OCI-LY7 (cell line): ENCODE measurements at regions of chr15 and their contacts with region 1.

Region 1: GRCh38 chr15:78034495-78035191 is 42.9 kb downstream of the TBC1D2B start:
- DNase-seq: peak; percentile 33
- H3K4me3 ChIP-seq: no peak overlapping the region
- H3K27ac ChIP-seq: peak overlapping the region; percentile 33
- H3K4me1 ChIP-seq: peaks cover 58% of the 10 kb centered on the region
- CTCF ChIP-seq: no peak

Region 2: DNA sequence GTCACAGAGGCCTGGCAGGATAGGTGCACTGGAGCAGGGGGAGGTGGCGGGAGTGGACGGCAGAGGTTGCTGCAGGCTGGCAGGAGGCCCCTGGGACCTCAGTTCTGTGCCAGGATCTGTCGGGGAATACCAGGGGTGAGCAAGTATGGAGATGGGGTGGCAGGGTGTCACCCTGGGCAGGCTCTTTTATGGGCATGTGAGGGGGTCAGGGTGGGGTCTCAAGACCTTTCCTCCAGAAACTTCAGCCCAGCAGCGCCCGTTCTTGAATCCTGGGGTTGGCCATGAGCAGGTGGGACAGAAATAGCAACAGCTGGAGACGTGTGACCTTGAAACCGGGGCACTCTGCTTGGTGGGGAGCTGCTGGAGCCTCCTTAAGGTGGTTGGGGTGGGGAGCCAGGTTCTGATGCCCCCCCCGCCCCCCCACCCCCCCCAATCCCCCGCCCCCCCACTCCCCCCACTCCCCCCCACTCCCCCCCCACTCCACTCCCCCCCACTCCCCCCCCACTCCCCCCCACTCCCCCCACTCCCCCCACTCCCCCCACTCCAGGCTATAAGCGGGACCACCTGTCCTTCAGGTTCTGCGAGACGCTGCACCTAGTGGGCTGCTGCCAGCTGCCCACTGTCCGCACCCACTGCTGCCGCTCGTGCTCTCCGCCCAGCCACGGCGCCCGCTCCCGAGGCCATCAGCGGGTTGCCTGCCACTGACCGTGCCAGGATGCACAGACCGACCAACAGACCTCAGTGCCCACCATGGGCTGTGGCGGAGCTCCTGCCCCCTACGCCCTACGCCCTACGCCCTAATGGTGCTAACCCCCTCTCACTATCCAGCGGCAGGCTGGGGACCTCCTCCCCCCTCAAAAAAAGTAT is 42.1 kb before region 1 on chr15:
- CTCF ChIA-PET with region 1: no interaction called
- POLR2A ChIA-PET with region 1: no interaction called
- intact Hi-C with region 1: no loop called
- DNase-seq: no peak
- H3K4me3 ChIP-seq: no peak overlapping the region
- H3K27ac ChIP-seq: peak overlapping the region; percentile 59
- H3K4me1 ChIP-seq: peaks cover 57% of the 10 kb centered on the region
- CTCF ChIP-seq: no peak

Region 3: GRCh38 chr15:78049691-78050440 is 15.2 kb after region 1 on chr15:
- CTCF ChIA-PET with region 1: interaction called, 4 read pairs
- POLR2A ChIA-PET with region 1: interaction called, 17 read pairs
- intact Hi-C with region 1: no loop called
- DNase-seq: peak; percentile 53
- H3K4me3 ChIP-seq: no peak overlapping the region
- H3K27ac ChIP-seq: peak overlapping the region; percentile 30
- H3K4me1 ChIP-seq: peaks cover 75% of the 10 kb centered on the region
- CTCF ChIP-seq: no peak

Region 4: DNA sequence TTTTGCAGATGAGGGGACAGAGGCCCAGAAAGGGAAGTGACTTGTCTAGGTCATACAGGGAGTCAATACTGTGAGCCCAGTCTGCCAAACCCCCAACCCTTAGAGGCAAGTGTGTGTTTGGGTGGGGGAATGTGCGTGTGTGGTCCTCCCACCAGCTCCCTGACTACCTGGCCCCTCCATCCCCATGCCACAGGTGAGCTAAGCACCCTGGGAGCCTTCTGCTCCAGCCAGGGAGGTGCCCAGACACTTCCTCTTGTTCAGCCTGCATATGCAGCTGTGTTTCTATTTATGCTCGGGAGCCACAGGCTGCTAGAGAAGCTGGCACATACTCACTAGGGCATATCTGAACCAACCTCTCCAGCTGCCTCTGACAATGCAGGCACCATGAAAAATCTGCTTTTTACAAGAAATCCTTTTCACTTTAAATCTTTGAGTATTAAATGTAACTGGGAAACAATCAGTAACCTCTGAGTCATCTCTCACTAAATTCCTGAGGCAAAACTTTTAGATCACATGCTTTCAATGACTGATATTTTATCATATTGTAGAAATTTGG is 22.1 kb after region 1 on chr15:
- CTCF ChIA-PET with region 1: interaction called, 4 read pairs
- POLR2A ChIA-PET with region 1: interaction called, 17 read pairs
- intact Hi-C with region 1: no loop called
- DNase-seq: peak; percentile 88
- H3K4me3 ChIP-seq: peak overlapping the region; percentile 45
- H3K27ac ChIP-seq: peak overlapping the region; percentile 81
- H3K4me1 ChIP-seq: peaks cover 91% of the 10 kb centered on the region
- CTCF ChIP-seq: no peak

Region 5: DNA sequence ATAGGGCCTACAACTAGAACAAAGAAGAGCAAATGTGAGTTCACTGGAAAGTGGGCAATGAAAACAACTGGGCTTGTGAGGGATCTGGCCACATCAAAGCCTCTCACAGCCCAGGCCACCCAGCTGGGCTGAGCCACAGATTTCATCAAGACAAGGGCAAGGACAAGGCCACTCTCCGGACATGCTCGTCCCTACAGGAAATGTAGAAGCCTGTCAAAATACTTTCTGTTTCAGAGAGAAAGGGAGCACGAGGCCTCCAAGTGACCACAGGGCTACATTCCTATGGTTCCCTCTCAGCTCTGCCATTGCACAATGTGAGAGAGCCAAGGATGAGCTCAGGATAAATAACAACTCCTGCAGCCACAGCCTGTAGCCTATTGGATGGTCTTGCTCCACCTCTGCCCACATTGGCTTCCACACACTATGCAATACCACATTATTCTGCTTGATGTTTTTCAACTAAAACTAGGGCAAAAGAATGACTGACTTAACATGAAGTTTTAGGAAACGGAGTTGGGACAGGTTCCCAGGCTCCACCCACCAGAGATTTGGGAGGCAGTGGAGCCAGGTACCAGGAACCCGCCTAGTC is 30.7 kb after region 1 on chr15:
- CTCF ChIA-PET with region 1: no interaction called
- POLR2A ChIA-PET with region 1: interaction called, 13 read pairs
- intact Hi-C with region 1: loop called (anchors 1 kb)
- DNase-seq: no peak
- H3K4me3 ChIP-seq: peak overlapping the region; percentile 50
- H3K27ac ChIP-seq: peak overlapping the region; percentile 82
- H3K4me1 ChIP-seq: peaks cover 91% of the 10 kb centered on the region
- CTCF ChIP-seq: no peak